Activated CD8-positive, alpha-beta T cell treated with anti-CD3 and anti-CD28 coated beads for 36 hours (primary cell): ENCODE measurements at regions of chr1 and their contacts with region 1.

Region 1: DNA sequence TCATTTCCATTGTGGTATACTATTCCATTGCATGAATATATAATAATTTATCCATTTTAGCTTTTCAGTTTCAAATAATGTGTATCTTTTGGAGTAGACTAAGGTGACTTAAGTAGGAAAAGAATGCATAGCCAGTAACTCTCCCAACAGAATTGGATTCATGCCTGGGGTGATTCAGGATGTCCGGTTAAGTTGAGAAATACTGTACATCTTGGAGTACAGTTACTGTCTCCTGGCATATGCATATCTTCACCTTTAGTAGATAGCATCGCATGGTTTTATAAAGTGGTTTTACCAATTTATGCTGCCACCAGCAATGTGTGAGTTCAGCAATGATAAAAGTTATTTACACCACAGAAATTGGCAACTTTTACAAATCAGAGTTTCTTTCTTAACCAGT is 18.6 kb upstream of the SLC6A9 start:
- DNase-seq: no peak
- ATAC-seq: no peak
- H3K4me3 Mint-ChIP-seq: no peak overlapping the region
- H3K27ac Mint-ChIP-seq: no peak overlapping the region
- H3K4me1 Mint-ChIP-seq: peaks cover 18% of the 10 kb centered on the region
- H3K27me3 Mint-ChIP-seq: peaks cover 3% of the 10 kb centered on the region
- CTCF ChIP-seq: no peak

Region 2: GRCh38 chr1:43529206-43529731 is 520.6 kb before region 1 on chr1:
- CTCF ChIA-PET with region 1: interaction called, 7 read pairs
- POLR2A ChIA-PET with region 1: no interaction called
- intact Hi-C with region 1: loop called (anchors 10 kb)
- DNase-seq: peak; percentile 89
- ATAC-seq: peak; percentile 81
- H3K4me3 Mint-ChIP-seq: no peak overlapping the region
- H3K27ac Mint-ChIP-seq: no peak overlapping the region
- H3K4me1 Mint-ChIP-seq: peaks cover 14% of the 10 kb centered on the region
- H3K27me3 Mint-ChIP-seq: peaks cover 34% of the 10 kb centered on the region
- CTCF ChIP-seq: peak; percentile 95

Region 3: DNA sequence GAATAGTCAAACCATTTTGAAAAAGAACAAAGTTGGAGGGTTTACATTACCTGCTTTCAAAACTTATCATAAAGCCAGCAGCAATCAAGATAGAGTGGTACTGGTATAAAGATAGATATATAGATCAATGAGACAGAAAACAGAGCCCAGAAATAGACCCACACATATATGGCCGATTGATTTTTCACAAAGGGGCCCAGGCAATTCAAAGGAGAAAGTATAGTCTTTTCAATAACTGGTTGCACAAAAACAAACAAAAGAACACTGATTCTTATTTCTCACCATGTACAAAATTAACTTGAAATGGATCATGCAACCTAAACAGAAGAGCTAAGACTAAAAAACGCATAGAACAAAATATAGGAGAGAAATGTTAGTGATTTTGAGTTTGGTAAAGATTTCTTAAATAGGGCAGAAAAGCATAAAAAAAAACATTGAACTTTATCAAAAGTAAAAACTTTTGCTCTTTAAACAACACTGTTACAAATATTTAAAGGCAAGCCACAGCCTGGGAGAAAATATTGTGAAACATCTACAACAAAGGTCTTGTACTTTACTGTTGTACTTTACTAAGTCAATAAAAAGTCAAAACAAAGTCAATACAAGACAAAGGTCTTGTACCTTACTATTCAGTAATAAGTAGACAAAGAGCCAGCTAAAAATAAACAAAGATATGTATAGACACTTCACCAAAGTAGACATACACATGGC is 292.3 kb before region 1 on chr1:
- CTCF ChIA-PET with region 1: no interaction called
- POLR2A ChIA-PET with region 1: no interaction called
- intact Hi-C with region 1: no loop called
- DNase-seq: no peak
- ATAC-seq: no peak
- H3K4me3 Mint-ChIP-seq: no peak overlapping the region
- H3K27ac Mint-ChIP-seq: no peak overlapping the region
- H3K4me1 Mint-ChIP-seq: peaks cover 6% of the 10 kb centered on the region
- H3K27me3 Mint-ChIP-seq: no peaks in the 10 kb centered on the region
- CTCF ChIP-seq: no peak

Region 4: DNA sequence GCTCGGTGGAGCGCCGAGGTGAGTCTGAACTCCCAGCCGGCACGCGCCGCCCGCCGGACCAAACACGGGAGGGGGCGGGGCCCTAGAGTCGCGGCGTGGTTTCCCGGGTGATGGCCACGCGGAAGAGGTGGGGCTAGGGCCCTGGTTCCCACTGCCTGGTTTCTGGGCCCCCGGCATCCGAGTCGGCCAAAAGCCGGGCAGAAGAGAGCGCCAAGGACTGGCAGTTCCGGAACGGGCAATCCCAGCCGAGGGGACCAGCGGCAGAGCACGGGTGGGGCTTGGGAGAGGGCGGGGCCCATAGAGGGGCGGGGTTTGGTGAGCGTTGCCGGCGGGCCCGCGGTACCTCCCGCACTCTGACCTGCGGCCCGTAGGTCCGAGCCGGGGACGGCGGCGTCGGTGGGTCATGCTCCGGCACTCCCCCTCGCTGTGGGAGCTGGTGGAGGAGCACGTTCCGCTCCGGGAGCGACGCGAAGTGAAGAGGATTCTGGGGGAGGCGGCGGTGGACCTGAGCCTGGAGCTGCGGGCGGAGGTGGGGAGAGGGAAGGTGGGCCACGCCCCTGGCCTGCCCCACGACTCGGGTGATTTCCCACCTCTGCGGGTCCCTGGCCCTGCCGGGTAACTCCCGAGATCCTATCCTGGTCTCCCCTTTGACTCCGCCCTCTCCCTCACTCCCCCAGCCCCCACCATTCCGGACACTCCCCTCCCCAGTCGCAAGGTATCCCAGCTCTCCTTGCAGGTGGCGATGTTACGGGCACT is 58.2 kb before region 1 on chr1 and contains the start of gene CCDC24:
- CTCF ChIA-PET with region 1: interaction called, 15 read pairs
- POLR2A ChIA-PET with region 1: no interaction called
- intact Hi-C with region 1: no loop called
- DNase-seq: peak; percentile 81
- ATAC-seq: peak; percentile 87
- H3K4me3 Mint-ChIP-seq: peak within 1 kb of the TSS; percentile 80
- H3K27ac Mint-ChIP-seq: peak within 1 kb of the TSS; percentile 59
- H3K4me1 Mint-ChIP-seq: peaks cover 12% of the 10 kb centered on the region
- H3K27me3 Mint-ChIP-seq: no peaks in the 10 kb centered on the region
- CTCF ChIP-seq: no peak
- total RNA-seq, gene CCDC24: 1.4 to 1.8 TPM

Region 5: DNA sequence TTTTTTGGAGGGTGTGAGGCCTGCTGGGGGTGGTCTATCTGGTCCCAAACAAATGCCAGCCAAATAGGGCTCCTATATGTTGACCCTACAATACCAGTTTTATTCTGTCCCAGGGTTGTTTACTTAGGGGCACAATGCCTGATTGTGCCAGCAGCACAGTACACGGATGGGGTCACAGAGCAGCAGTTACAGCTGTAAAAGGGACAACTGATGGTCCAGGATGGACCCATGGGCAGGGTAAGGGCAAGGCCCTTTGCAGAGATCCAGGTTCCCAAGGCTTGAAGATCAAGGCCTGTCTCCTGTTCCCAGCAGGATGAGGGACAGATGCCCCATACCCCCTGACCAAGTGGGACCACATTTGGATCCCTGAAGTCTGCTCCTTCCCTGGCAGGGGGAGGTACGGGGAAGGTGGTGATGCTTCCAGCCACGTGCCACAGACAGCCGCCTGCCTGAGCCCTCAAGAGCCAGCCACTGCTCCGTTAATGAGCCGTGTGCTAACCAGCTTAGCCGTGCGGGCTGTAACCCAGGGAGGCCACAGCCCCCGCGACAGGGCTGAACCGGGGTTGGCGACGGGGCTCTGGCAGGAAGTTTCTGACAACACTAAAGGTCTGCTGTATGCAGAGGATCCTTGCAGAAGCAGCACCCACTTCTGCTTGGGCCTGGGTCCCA is 36.8 kb before region 1 on chr1:
- CTCF ChIA-PET with region 1: interaction called, 8 read pairs
- POLR2A ChIA-PET with region 1: no interaction called
- intact Hi-C with region 1: loop called (anchors 5 kb)
- DNase-seq: peak; percentile 27
- ATAC-seq: peak; percentile 61
- H3K4me3 Mint-ChIP-seq: no peak overlapping the region
- H3K27ac Mint-ChIP-seq: no peak overlapping the region
- H3K4me1 Mint-ChIP-seq: peaks cover 12% of the 10 kb centered on the region
- H3K27me3 Mint-ChIP-seq: no peaks in the 10 kb centered on the region
- CTCF ChIP-seq: no peak

Region 6: DNA sequence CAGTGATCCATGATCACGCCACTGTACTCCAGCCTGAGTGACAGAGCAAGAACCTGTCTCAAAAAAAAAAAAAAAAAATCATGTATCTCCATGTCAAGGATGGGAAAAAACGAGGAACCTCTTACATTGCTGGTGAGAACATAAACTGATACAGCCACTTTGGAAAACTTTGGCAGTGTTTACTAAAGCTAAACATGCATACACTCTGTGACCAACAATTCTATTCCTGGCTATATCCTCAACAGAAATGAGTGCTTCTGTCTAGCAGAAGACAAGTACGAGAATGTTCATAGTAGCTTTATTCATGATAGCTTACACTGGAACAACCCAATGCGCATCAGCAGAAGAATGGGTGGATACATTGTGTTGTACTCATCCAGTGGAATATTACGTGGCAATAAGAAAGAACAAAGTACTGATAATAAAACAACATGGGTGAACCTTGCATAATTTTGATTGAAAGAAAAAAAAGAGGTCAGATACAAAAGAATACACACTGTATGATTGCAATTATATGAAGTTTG is 12.9 kb after region 1 on chr1:
- CTCF ChIA-PET with region 1: interaction called, 32 read pairs
- POLR2A ChIA-PET with region 1: no interaction called
- intact Hi-C with region 1: no loop called
- DNase-seq: no peak
- ATAC-seq: no peak
- H3K4me3 Mint-ChIP-seq: no peak overlapping the region
- H3K27ac Mint-ChIP-seq: no peak overlapping the region
- H3K4me1 Mint-ChIP-seq: no peaks in the 10 kb centered on the region
- H3K27me3 Mint-ChIP-seq: no peaks in the 10 kb centered on the region
- CTCF ChIP-seq: no peak